ENCODE measurements at regions of chr3 and their contacts with region 1.

Region 1: GRCh38 chr3:12891985-12892839 is 50.8 kb upstream of the RPL32 start:
- DNase-seq: peak; percentile 78
- H3K4me3 ChIP-seq: no peak overlapping the region
- H3K27ac ChIP-seq: no peak overlapping the region
- H3K4me1 ChIP-seq: peaks cover 4% of the 10 kb centered on the region
- H3K27me3 ChIP-seq: no peaks in the 10 kb centered on the region
- CTCF ChIP-seq: peak; percentile 90

Region 2: DNA sequence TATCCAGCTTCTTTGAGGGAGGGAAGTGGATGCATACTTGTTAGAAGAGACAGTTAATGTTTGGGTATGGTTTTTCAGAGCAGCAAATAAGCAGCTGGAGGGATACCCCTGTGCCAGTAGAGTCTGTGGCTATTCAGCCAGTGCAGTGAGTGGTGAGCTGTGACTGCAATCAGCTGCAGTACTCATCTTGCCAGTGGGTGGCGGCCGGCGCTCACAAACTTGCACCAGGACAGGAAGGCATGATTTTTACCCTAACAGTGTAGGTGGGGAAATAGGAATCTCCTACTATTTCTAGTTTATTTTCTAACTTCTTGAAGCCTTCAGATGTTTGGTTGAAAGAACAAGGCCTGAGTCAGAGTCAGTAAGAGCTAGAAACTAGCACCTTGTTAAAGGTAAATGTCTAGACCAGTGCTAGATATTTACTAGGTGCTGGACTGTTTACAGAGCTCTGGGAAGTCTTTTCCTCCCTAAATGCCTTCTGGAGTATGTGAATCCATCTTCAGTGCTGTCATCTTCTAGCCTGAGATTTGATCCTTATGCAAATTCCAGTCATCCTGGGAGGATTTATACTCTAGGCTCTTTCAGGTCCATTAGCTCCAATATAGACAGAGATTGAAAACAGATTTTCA is 757.1 kb before region 1 on chr3:
- CTCF ChIA-PET with region 1: no interaction called
- POLR2A ChIA-PET with region 1: no interaction called
- intact Hi-C with region 1: loop called (anchors 10 kb)
- DNase-seq: peak; percentile 68
- H3K4me3 ChIP-seq: no peak overlapping the region
- H3K27ac ChIP-seq: no peak overlapping the region
- H3K4me1 ChIP-seq: no peaks in the 10 kb centered on the region
- H3K27me3 ChIP-seq: peaks cover 9% of the 10 kb centered on the region
- CTCF ChIP-seq: peak; percentile 92

Region 3: DNA sequence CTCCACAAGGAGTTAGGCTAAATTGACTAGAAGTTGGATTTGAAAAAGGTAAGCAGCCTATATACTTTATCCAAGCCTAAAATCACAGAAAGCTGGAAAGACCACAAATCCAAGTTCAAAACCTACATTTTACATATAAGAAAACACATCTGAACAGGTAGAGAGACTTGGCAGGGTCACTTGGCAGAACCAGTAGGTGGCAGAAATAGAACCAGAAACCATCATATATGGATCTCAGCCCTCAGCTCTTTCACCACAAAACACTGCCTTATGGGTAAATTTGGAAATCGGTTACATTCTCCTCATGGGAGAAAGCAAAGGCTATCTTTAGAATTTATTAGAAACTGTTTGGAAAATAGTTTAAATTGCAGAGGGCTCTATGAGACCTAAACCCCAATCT is 291.1 kb before region 1 on chr3:
- CTCF ChIA-PET with region 1: no interaction called
- POLR2A ChIA-PET with region 1: no interaction called
- intact Hi-C with region 1: loop called (anchors 10 kb)
- DNase-seq: no peak
- H3K4me3 ChIP-seq: no peak overlapping the region
- H3K27ac ChIP-seq: no peak overlapping the region
- H3K4me1 ChIP-seq: no peaks in the 10 kb centered on the region
- H3K27me3 ChIP-seq: no peaks in the 10 kb centered on the region
- CTCF ChIP-seq: no peak

Region 4: DNA sequence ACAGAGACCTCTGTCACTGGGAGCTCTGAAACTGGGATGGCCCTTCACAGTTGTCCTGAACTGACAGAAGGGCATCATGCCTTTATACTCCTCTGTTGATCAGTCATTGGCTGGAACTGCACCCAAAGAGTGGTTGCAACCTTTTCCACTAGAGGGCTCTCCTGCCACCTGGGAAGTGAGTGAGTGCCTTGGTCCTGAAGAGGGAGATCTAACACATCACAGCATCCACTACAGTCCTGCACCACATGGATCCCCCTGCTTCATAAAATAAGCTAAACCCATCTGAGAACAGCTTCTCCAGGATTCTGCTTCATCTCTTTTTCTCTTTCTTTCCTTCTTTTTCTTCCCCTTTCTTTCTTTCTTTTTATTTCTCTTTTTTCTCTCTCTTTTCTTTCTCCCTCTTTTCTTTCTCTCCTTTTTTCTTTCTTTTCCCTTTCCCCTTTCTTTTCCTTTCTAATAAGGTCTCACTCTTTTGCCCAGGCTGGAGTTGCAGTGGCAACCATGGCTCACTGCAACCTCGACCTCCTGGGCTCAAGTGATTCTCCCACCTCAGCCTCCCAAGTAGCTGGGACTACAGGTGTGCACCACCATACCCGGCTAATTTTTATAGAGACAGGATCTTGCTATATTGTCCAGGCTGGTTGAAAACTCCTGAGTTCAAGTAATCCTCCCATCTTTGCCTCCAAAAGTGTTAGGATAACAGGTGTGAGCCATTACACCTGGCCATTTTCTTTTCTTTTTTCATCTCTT is 185.5 kb before region 1 on chr3:
- CTCF ChIA-PET with region 1: no interaction called
- POLR2A ChIA-PET with region 1: no interaction called
- intact Hi-C with region 1: loop called (anchors 10 kb)
- DNase-seq: peak; percentile 82
- H3K4me3 ChIP-seq: no peak overlapping the region
- H3K27ac ChIP-seq: no peak overlapping the region
- H3K4me1 ChIP-seq: no peaks in the 10 kb centered on the region
- H3K27me3 ChIP-seq: no peaks in the 10 kb centered on the region
- CTCF ChIP-seq: peak; percentile 90

Region 5: DNA sequence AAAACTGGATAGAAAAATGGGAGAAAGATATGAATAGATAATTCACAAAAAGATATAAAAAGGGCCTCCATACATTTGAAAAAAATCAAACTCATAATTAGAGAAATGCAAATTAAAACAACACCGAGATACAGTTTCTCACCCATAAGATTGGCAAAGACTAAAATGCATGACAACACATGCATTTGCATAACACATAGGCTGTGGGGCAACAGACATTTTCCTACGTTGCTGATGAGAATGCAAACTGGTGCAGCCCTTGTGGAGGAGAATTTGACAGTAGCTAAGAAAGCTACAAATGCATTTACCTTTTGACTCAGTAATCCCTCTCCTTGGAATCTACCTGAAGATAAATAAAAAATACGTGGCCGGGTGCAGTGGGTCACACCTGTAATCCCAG is 107.1 kb before region 1 on chr3:
- CTCF ChIA-PET with region 1: no interaction called
- POLR2A ChIA-PET with region 1: no interaction called
- intact Hi-C with region 1: loop called (anchors 5 kb)
- DNase-seq: no peak
- H3K4me3 ChIP-seq: no peak overlapping the region
- H3K27ac ChIP-seq: no peak overlapping the region
- H3K4me1 ChIP-seq: no peaks in the 10 kb centered on the region
- H3K27me3 ChIP-seq: no peaks in the 10 kb centered on the region
- CTCF ChIP-seq: no peak

Region 6: DNA sequence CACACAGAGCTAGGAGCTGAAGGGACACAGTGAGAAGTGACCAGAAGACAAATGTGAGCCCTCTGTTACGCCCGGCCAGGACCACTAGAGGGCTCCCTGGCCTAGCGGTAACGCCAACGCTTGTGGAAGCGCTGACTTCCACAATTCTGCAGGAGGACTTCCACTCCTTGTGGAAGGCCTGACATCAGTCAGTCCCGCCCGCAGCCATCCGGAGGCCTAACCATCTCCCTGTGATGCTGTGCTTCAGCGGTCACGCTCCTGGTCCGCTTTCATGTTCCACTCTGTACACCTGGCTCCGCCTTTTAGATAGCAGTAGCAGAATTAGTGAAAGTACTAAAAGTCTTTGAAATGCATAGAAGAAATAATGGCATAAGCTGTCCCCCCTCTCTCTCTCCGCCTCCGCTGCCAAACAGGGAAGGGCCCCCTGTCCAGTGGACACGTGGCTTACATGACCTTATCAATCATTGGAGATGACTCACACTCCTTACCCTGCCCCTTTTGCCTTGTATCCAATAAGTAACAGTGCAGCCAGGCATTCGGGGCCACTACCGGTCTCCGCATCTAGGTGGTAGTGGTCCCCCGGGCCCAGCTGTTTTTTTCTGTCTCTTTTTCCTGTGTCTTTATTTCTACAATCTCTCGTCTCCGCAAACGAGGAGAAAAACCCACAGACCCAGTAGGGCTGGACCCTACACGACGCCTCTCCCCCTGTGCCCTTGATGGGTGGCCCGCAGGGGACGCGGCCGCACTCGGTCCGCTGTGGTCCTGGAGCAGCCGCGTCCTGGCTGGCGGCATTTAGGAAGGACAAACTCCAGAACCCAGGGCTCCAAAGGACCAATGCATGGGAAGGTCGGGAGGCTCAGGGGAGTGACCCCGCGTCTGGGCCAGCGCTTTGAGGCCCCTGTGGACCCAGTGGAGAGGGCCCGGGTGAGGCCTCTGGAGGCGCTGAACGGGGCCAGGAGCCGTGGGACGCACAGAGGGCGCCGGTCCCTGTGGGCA is 23.9 kb before region 1 on chr3:
- CTCF ChIA-PET with region 1: interaction called, 3 read pairs
- POLR2A ChIA-PET with region 1: no interaction called
- intact Hi-C with region 1: loop called (anchors 1 kb)
- DNase-seq: peak; percentile 84
- H3K4me3 ChIP-seq: no peak overlapping the region
- H3K27ac ChIP-seq: no peak overlapping the region
- H3K4me1 ChIP-seq: no peaks in the 10 kb centered on the region
- H3K27me3 ChIP-seq: no peaks in the 10 kb centered on the region
- CTCF ChIP-seq: peak; percentile 84